CD8-positive, alpha-beta T cell (primary cell): ENCODE measurements at regions of chr17 and their contacts with region 1.

Region 1: GRCh38 chr17:28726226-28727130 is at the start of gene TLCD1:
- DNase-seq: peak; percentile 82 to 94 (median 91)
- ATAC-seq: peak; percentile 43
- H3K4me3 ChIP-seq: peak within 1 kb of the TSS; percentile 88 to 92
- H3K4me3 Mint-ChIP-seq: peak within 1 kb of the TSS; percentile 97
- H3K27ac ChIP-seq: peak within 1 kb of the TSS; percentile 43 to 98
- H3K27ac Mint-ChIP-seq: peak within 1 kb of the TSS; percentile 99
- H3K4me1 ChIP-seq: peaks cover 38% of the 10 kb centered on the region
- H3K4me1 Mint-ChIP-seq: peaks cover 59% of the 10 kb centered on the region
- H3K27me3 ChIP-seq: no peaks in the 10 kb centered on the region
- H3K27me3 Mint-ChIP-seq: no peaks in the 10 kb centered on the region
- CTCF ChIP-seq: peak; percentile 99
- total RNA-seq, gene TLCD1: 0.73 to 1.1 TPM

Region 2: GRCh38 chr17:27929990-27930389 is 796.5 kb before region 1 on chr17:
- CTCF ChIA-PET with region 1: no interaction called
- POLR2A ChIA-PET with region 1: no interaction called
- intact Hi-C with region 1: no loop called
- DNase-seq: no peak
- ATAC-seq: no peak
- H3K4me3 ChIP-seq: no peak overlapping the region
- H3K4me3 Mint-ChIP-seq: no peak overlapping the region
- H3K27ac ChIP-seq: no peak overlapping the region
- H3K27ac Mint-ChIP-seq: no peak overlapping the region
- H3K4me1 ChIP-seq: no peaks in the 10 kb centered on the region
- H3K4me1 Mint-ChIP-seq: no peaks in the 10 kb centered on the region
- H3K27me3 ChIP-seq: no peaks in the 10 kb centered on the region
- H3K27me3 Mint-ChIP-seq: peaks cover 17% of the 10 kb centered on the region
- CTCF ChIP-seq: no peak

Region 3: DNA sequence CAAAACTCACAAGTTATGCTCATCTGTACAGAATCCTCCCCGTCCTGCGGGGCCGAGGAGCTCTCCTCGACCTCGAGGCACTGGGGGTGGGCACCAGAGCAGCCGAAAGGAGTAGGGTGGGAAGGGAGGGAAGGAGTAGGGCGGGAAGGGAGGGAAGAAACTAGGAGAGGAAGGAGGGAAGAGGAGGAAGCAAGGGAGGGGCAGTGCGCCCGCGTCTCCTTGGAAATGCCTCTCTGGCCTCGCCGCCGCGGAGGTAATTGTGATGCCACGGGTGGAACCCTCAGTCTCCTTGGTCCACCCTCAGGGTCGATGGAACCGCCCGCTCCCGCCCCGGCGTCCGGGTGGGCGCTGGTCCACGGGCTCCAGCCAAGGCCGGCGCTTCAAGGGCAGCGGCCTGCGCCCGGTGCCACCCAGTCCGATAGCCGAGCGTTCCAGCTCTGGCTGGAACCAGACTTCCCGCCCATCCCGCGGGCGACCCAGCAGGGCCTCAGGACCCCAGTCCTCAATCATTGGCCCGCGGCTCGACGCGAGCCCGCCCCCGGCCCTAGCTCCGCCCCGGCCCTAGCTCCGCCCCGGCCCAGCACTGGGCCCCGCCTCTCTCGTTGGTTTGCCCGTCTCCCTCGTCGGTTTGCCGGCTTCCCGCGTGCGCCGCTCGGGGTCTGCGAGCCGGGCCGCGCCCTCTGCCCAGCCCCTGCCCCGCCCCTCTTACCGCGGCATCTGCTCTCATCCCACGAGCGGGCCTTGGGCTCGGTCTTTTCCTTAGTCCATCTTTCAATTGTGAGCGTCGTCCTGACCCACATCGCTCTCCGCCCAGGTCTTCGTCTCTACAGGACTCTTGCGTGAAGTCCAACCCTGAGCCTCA is 15.4 kb before region 1 on chr17:
- CTCF ChIA-PET with region 1: interaction called, 17 read pairs
- POLR2A ChIA-PET with region 1: interaction called, 40 read pairs
- intact Hi-C with region 1: loop called in 1 of 2 experiments (anchors 1 kb)
- DNase-seq: peak; percentile 77 to 90 (median 89)
- ATAC-seq: peak; percentile 92
- H3K4me3 ChIP-seq: peak overlapping the region; percentile 66 to 89
- H3K4me3 Mint-ChIP-seq: peak overlapping the region; percentile 89
- H3K27ac ChIP-seq: peak overlapping the region; percentile 69 to 76
- H3K27ac Mint-ChIP-seq: peak overlapping the region; percentile 91
- H3K4me1 ChIP-seq: peaks cover 16% of the 10 kb centered on the region
- H3K4me1 Mint-ChIP-seq: peaks cover 17% of the 10 kb centered on the region
- H3K27me3 ChIP-seq: no peaks in the 10 kb centered on the region
- H3K27me3 Mint-ChIP-seq: peaks cover 14% of the 10 kb centered on the region
- CTCF ChIP-seq: no peak

Region 4: GRCh38 chr17:28750178-28751047 is 23.9 kb after region 1 on chr17:
- CTCF ChIA-PET with region 1: interaction called, 532 read pairs
- POLR2A ChIA-PET with region 1: interaction called, 187 read pairs
- intact Hi-C with region 1: loop called (anchors 1 kb)
- DNase-seq: peak; percentile 69 to 93 (median 89)
- ATAC-seq: peak; percentile 93
- H3K4me3 ChIP-seq: no peak overlapping the region
- H3K4me3 Mint-ChIP-seq: no peak overlapping the region
- H3K27ac ChIP-seq: no peak overlapping the region
- H3K27ac Mint-ChIP-seq: no peak overlapping the region
- H3K4me1 ChIP-seq: peaks cover 15% of the 10 kb centered on the region
- H3K4me1 Mint-ChIP-seq: peaks cover 16% of the 10 kb centered on the region
- H3K27me3 ChIP-seq: no peaks in the 10 kb centered on the region
- H3K27me3 Mint-ChIP-seq: no peaks in the 10 kb centered on the region
- CTCF ChIP-seq: peak; percentile 99

Region 5: DNA sequence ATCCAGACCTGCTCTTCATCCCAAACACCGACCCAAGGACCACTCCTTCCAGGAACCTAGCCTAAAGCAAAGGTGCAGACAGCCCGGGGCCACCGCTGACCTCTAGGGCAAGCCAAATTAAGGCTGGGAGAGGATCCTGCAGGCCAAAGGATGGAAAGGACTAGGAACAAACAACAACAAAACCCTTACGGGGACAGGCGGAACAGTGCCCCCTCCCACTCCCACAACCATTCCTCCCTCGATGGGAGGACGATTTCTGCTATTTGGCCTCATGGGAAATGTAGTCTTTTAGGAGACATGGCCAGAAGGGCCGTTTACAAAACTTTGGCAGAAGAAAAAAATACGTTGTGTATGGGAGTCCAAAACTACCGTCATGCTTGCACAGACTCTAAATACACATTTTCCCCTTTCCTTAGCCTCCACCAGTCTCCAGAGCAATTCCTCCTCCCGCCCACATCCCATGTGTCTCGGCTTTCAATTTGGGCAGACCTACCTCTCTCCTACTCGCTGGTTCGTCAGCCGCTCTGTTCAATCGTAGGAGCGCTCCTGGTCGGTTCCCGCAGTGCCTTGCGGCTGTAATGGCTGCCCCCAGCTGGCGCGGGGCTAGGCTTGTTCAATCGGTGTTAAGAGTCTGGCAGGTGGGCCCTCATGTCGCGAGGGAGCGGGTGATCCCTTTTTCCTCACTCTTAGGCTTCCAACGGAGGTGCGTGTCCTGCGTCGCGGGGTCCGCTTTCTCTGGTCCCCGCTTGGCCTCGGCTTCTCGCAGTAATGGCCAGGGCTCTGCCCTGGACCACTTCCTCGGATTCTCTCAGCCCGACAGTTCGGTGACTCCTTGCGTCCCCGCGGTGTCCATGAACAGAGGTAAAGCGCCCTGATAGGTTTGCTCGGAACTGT is 128.2 kb after region 1 on chr17 and contains the start of gene ERAL1:
- CTCF ChIA-PET with region 1: interaction called, 5 read pairs
- POLR2A ChIA-PET with region 1: no interaction called
- intact Hi-C with region 1: loop called in 1 of 2 experiments (anchors 1 kb)
- DNase-seq: peak; percentile 62 to 90 (median 84)
- ATAC-seq: peak; percentile 99
- H3K4me3 ChIP-seq: peak within 1 kb of the TSS; percentile 75 to 96
- H3K4me3 Mint-ChIP-seq: peak within 1 kb of the TSS; percentile 95
- H3K27ac ChIP-seq: peak within 1 kb of the TSS; percentile 61 to 74
- H3K27ac Mint-ChIP-seq: peak within 1 kb of the TSS; percentile 90
- H3K4me1 ChIP-seq: peaks cover 12% of the 10 kb centered on the region
- H3K4me1 Mint-ChIP-seq: peaks cover 18% of the 10 kb centered on the region
- H3K27me3 ChIP-seq: no peaks in the 10 kb centered on the region
- H3K27me3 Mint-ChIP-seq: no peaks in the 10 kb centered on the region
- CTCF ChIP-seq: no peak
- total RNA-seq, gene ERAL1: 20.0 to 21.2 TPM

Region 6: DNA sequence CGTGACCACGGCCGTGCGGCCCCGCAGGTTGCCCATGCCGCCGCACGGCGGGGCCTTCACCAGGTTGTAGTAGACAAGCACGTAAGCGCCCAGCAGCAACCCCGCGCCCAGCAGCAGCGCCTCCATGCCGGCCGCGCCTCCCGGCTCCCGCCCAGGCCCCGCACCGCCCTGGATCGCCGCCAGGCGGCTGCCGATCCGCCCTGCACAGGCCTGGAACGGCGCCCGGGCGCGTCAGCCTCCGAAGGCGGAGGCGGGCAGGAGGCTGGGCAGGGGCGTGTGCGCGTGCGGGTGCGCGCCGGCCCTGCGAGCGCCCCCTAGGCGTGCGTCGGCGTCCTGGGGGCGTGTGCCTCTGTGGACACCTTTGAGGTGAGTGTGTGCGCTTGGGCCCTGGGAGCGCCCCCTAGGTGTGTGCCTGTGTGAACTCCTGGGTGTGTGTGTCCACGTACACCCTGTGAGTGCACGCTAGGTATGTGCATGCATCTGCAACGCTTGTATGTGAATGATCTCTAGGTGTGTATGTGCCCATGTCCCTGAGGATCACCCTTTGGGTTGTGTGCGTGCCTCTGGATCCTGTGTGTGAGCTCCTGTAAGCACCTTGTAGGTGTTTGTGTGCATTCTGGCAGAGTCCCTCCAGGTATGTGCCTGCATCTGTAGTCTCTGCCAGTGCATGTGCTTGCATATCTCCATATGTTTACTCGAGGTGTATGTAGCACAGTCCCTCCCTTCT is 176.5 kb after region 1 on chr17 and contains the start of gene DHRS13:
- CTCF ChIA-PET with region 1: interaction called, 18 read pairs
- POLR2A ChIA-PET with region 1: interaction called, 4 read pairs
- intact Hi-C with region 1: loop called (anchors 1 to 2 kb)
- DNase-seq: peak; percentile 87 to 98 (median 95)
- ATAC-seq: peak; percentile 93
- H3K4me3 ChIP-seq: peak within 1 kb of the TSS; percentile 71 to 72
- H3K4me3 Mint-ChIP-seq: peak within 1 kb of the TSS; percentile 93
- H3K27ac ChIP-seq: peak within 1 kb of the TSS; percentile 61 to 62
- H3K27ac Mint-ChIP-seq: peak within 1 kb of the TSS; percentile 90
- H3K4me1 ChIP-seq: peaks cover 31% of the 10 kb centered on the region
- H3K4me1 Mint-ChIP-seq: peaks cover 33% of the 10 kb centered on the region
- H3K27me3 ChIP-seq: no peaks in the 10 kb centered on the region
- H3K27me3 Mint-ChIP-seq: no peaks in the 10 kb centered on the region
- CTCF ChIP-seq: peak; percentile 100
- total RNA-seq, gene DHRS13: 27.3 to 30.9 TPM

Region 7: GRCh38 chr17:29111816-29112499 is 385.5 kb after region 1 on chr17:
- CTCF ChIA-PET with region 1: interaction called, 9 read pairs
- POLR2A ChIA-PET with region 1: no interaction called
- intact Hi-C with region 1: loop called (anchors 2 to 10 kb)
- DNase-seq: peak; percentile 49 to 79 (median 64)
- ATAC-seq: peak; percentile 88
- H3K4me3 ChIP-seq: no peak overlapping the region
- H3K4me3 Mint-ChIP-seq: no peak overlapping the region
- H3K27ac ChIP-seq: no peak overlapping the region
- H3K27ac Mint-ChIP-seq: no peak overlapping the region
- H3K4me1 ChIP-seq: peaks cover 3% of the 10 kb centered on the region
- H3K4me1 Mint-ChIP-seq: no peaks in the 10 kb centered on the region
- H3K27me3 ChIP-seq: no peaks in the 10 kb centered on the region
- H3K27me3 Mint-ChIP-seq: no peaks in the 10 kb centered on the region
- CTCF ChIP-seq: peak; percentile 57